Psoas muscle (tissue), 8 donors: ENCODE measurements at regions of chrX and their contacts with region 1.

Region 1: DNA sequence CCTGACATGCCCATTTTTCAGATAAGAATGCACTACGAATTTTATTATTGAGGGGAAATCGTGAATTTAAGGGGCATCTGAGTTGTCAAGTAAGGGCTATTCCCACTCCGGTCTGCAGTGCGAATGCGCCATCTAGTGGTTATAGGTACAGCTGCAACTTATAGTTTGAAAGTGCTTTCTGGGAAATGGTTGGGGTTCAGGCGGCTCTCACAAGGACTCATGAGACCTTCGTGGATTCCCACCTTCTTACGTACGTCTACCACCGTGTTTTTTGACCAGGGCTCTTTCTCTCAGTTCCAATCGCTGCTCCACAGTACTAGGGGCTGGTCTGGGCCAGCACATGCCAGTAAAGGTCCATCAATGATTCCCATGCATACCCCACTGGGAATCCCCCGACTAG is 12.3 kb downstream of the MSL3 start:
- DNase-seq: no peak
- ATAC-seq: peak; percentile 68 to 87 (median 76)
- H3K4me3 ChIP-seq: no peak overlapping the region
- H3K27ac ChIP-seq: no peak overlapping the region
- H3K4me1 ChIP-seq: no peaks in the 10 kb centered on the region
- H3K27me3 ChIP-seq: no peaks in the 10 kb centered on the region
- CTCF ChIP-seq: peak; percentile 83

Region 2: DNA sequence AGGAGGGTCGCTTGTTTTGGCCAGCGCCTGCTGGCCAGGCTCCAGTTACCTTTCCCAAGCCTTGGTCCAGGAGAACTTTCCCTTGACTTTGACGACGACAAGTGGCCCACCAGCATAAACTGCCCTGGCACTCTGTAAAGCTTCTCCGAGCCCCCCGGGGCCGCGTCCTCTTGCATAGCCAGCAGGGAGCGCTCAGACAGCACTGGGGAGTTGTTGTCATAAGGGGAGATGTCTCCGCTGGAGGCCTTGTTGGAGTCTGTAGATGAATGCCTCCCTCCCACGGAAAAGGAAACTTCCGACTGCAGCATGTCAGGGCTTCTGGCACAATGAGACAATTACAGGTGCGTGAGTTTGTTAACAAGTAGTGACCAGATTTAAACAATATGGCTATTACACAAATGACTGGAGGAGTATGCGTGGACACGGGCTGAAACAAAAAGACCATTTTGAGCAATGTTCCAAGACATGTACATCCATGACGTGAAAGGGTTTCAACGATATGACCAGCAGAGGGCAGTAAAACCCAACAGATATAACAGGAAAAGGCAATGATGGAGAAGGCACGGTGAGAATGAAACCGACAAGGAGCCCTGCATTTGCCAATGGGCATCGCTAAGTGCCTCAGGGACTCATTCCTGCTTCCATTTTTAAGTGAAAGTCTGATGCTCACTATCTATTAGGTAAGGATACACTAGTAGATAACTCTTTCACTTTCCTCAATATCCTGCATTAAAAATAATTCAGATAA is 626.2 kb before region 1 on chrX:
- intact Hi-C with region 1: loop called (anchors 5 to 10 kb)
- DNase-seq: peak in 1 of 2 donors; percentile 51
- ATAC-seq: peak; percentile 73 to 88 (median 78)
- H3K4me3 ChIP-seq: no peak overlapping the region
- H3K27ac ChIP-seq: no peak overlapping the region
- H3K4me1 ChIP-seq: no peaks in the 10 kb centered on the region
- H3K27me3 ChIP-seq: peaks cover 0 to 2% (median 0%) of the 10 kb centered on the region in 3 donors
- CTCF ChIP-seq: peak; percentile 65

Region 3: GRCh38 chrX:11381464-11381863 is 388.9 kb before region 1 on chrX:
- intact Hi-C with region 1: loop called in 1 of 2 experiments (anchors 5 kb)
- DNase-seq: no peak
- ATAC-seq: peak in 3 of 4 donors; percentile 62 to 76 (median 69)
- H3K4me3 ChIP-seq: no peak overlapping the region
- H3K27ac ChIP-seq: no peak overlapping the region
- H3K4me1 ChIP-seq: peaks cover 14% of the 10 kb centered on the region
- H3K27me3 ChIP-seq: no peaks in the 10 kb centered on the region
- CTCF ChIP-seq: peak; percentile 55

Region 4: GRCh38 chrX:11724122-11725017 is 46.0 kb before region 1 on chrX:
- intact Hi-C with region 1: loop called in 1 of 2 experiments (anchors 1 kb)
- DNase-seq: no peak
- ATAC-seq: peak in 3 of 4 donors; percentile 59 to 83 (median 63)
- H3K4me3 ChIP-seq: no peak overlapping the region
- H3K27ac ChIP-seq: no peak overlapping the region
- H3K4me1 ChIP-seq: peaks cover 13% of the 10 kb centered on the region
- H3K27me3 ChIP-seq: no peaks in the 10 kb centered on the region
- CTCF ChIP-seq: peak; percentile 73